GM18951 (cell line): ENCODE measurements at regions of chr6 and their contacts with region 1.

Region 1: DNA sequence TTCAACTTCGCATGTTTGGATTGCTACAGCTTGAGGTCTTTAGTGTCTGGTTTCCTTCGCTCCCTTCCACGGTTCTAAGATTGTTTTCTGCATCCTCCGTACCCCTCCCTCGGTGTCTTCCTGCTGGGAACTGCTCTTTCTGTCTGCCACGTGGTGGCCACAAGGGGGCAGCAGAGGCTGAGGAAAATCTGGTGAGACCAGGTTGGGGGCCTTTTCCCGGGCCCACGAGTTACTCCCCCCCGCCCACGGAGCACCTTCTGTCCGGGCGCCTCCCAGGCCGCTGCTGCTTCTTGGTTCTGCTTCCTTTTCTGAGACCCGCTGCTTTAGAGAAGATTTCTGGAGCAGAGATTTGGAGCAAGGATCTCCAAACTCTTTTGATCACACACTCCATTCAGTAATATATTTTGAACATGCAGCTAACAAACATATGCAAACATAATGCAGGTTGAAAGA is 21.1 kb upstream of the NOTCH4 start:
- POLR2A ChIP-seq: no peak

Region 2: GRCh38 chr6:32190054-32190851 is 54.7 kb before region 1 on chr6 and contains the start of gene PBX2:
- in situ Hi-C with region 1: no loop called
- POLR2A ChIP-seq: peak; percentile 65

Region 3: GRCh38 chr6:32402812-32403211 is 157.8 kb after region 1 on chr6:
- in situ Hi-C with region 1: loop called (anchors 10 kb)
- POLR2A ChIP-seq: no peak